PC-9 (cell line): ENCODE measurements at regions of chr2 and their contacts with region 1.

Region 1: DNA sequence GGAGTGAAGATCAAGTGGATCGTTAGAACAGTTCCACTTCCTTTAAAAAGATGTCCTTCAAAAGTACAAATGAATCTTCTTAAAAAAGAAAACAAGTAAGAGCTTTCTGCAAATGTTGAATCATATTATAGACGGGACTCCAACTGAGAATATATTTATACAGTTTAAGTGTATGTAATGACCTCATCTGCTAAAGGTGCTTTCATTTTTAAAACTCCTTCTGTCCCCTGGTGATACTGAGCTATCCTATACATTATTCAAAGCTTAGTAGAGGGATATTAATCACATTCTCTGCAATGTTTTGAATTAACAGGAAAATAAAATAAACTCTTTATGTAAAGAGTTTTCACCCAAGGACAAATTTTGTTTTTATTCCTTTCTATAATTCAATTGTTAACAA is 420.7 kb upstream of the SLC8A1 start:
- DNase-seq: no peak
- H3K4me3 ChIP-seq: no peak overlapping the region
- H3K27ac ChIP-seq: no peak overlapping the region
- H3K4me1 ChIP-seq: no peaks in the 10 kb centered on the region
- H3K27me3 ChIP-seq: no peaks in the 10 kb centered on the region
- CTCF ChIP-seq: no peak

Region 2: DNA sequence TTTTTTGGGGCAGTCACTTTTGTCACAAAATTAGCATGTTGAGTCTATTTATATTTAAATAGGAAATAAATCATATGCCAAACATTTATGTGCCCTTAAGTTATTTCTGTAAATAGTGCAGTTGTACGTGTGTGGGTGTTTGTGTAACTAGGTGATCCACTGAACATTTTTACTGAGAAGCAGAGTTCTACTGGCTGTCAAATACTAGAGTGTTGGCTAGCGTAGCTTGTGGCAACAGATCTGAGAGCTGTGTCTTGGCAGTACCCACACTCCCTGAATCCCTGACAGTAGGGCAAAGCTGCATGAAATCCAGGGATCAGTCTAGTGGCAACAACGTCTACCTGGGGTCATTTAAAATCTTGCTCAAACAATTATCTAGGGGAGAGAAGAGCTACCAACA is 147.5 kb before region 1 on chr2:
- CTCF ChIA-PET with region 1: no interaction called
- POLR2A ChIA-PET with region 1: no interaction called
- intact Hi-C with region 1: no loop called
- DNase-seq: no peak
- H3K4me3 ChIP-seq: no peak overlapping the region
- H3K27ac ChIP-seq: no peak overlapping the region
- H3K4me1 ChIP-seq: peaks cover 21% of the 10 kb centered on the region
- H3K27me3 ChIP-seq: no peaks in the 10 kb centered on the region
- CTCF ChIP-seq: no peak

Region 3: DNA sequence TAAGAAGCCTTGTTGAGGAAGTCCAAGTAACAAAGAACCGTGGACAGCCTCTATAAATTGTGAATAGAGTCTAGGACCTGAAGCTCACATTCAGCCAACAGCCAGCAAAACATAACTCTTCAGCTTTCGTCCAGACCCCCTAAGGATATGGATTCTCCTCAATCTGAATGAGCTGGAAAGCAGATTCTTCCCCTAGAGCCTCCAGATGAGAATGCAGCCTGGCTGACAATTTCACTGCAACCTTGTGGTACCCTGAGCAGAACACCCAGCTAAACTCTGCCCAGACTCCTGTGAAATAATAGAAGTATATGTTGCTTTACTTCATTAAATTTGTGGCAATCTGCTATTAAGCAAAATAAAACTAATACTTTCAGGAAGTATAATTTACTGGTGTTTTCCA is 62.8 kb after region 1 on chr2:
- CTCF ChIA-PET with region 1: no interaction called
- POLR2A ChIA-PET with region 1: no interaction called
- intact Hi-C with region 1: loop called (anchors 5 kb)
- DNase-seq: no peak
- H3K4me3 ChIP-seq: no peak overlapping the region
- H3K27ac ChIP-seq: no peak overlapping the region
- H3K4me1 ChIP-seq: no peaks in the 10 kb centered on the region
- H3K27me3 ChIP-seq: no peaks in the 10 kb centered on the region
- CTCF ChIP-seq: no peak